Activated CD8-positive, alpha-beta T cell treated with anti-CD3 and anti-CD28 coated beads for 36 hours (primary cell): ENCODE measurements at regions of chr9 and their contacts with region 1.

Region 1: GRCh38 chr9:97632985-97633858 is at the starts of genes NCBP1 and TSTD2:
- DNase-seq: peak; percentile 98
- ATAC-seq: peak; percentile 91
- H3K4me3 Mint-ChIP-seq: peak within 1 kb of the TSS; percentile 98
- H3K27ac Mint-ChIP-seq: peak within 1 kb of the TSS; percentile 99
- H3K4me1 Mint-ChIP-seq: peaks cover 48% of the 10 kb centered on the region
- H3K27me3 Mint-ChIP-seq: no peaks in the 10 kb centered on the region
- CTCF ChIP-seq: no peak
- total RNA-seq, gene NCBP1: 37.6 to 41.7 TPM
- total RNA-seq, gene TSTD2: 15.2 to 15.3 TPM

Region 2: DNA sequence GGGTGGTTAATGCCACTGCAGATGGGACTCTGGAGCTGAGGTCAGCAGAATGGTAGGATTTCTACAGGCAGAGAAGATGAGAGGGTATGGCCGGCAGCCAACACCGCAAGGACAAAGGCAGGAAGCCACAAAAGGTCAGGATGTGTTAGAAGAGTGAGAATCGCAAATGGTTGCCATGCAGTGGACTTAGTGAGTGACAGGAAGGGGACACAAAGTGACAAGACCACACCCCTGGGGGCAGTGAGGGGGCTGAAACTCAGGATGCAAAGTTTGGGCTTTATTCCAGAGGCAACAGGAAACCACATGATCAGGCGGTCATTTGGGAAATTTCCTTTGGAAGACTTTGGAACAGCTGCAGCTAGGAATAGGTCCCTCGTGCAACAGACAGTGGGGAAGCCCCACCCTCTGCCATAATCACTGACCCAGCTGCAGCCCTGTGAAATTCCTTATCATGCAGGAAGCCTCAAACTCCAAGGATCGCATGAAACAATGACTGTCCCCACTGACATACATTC is 340.0 kb before region 1 on chr9:
- CTCF ChIA-PET with region 1: no interaction called
- POLR2A ChIA-PET with region 1: no interaction called
- intact Hi-C with region 1: no loop called
- DNase-seq: no peak
- ATAC-seq: no peak
- H3K4me3 Mint-ChIP-seq: no peak overlapping the region
- H3K27ac Mint-ChIP-seq: no peak overlapping the region
- H3K4me1 Mint-ChIP-seq: no peaks in the 10 kb centered on the region
- H3K27me3 Mint-ChIP-seq: no peaks in the 10 kb centered on the region
- CTCF ChIP-seq: no peak

Region 3: DNA sequence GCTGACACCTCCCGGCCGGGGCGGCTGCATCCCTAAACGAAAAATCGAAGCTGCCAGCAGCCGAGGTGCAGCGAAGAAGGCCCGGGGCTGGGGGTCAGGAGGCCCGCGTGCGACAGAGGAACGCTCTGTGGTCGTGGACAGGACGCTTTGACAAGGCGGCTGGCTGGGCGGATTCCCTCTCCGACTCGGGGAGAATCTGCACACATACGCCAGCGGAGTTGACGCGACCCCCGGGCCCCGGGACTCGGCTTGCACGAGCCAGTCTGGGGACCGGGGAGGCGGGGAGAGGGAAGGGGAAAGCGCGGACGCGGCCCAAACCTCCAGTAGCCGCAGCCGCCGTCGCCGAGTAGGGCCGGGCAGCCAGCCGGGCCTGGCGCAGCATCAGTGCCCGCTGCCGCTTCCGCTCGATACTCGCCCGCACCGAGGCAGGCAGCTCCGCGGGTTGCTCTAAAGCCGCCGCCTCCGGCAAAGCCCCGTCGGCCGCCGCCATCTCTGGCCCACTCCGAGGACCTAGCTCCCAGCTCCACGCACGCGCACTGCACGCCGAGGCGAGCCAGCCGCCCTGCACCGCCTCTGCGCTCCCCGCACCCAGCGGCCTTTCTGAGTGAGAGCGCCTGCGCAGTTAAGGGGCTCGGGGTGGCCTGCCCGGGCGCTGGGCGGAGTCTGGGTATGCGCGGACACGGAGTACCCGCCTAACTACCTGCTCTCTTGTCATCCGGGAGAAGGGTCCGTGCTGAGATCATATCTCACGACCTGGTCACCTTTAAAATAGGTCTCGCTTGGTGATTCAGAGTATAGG is 63.8 kb after region 1 on chr9 and contains the start of gene XPA:
- CTCF ChIA-PET with region 1: interaction called, 3 read pairs
- POLR2A ChIA-PET with region 1: interaction called, 15 read pairs
- intact Hi-C with region 1: no loop called
- DNase-seq: peak; percentile 97
- ATAC-seq: peak; percentile 98
- H3K4me3 Mint-ChIP-seq: peak within 1 kb of the TSS; percentile 92
- H3K27ac Mint-ChIP-seq: peak within 1 kb of the TSS; percentile 94
- H3K4me1 Mint-ChIP-seq: peaks cover 46% of the 10 kb centered on the region
- H3K27me3 Mint-ChIP-seq: peaks cover 4% of the 10 kb centered on the region
- CTCF ChIP-seq: no peak
- total RNA-seq, gene XPA: 9.8 to 10.9 TPM